ENCODE measurements at regions of chr15 and their contacts with region 1.

Region 1: GRCh38 chr15:88834211-88834812 is 31.1 kb downstream of the ACAN start:
- DNase-seq: peak; percentile 39
- H3K4me3 ChIP-seq: no peak overlapping the region
- H3K27ac ChIP-seq: no peak overlapping the region
- H3K4me1 ChIP-seq: no peaks in the 10 kb centered on the region
- H3K27me3 ChIP-seq: no peaks in the 10 kb centered on the region
- CTCF ChIP-seq: peak; percentile 79

Region 2: GRCh38 chr15:88476635-88477060 is 357.7 kb before region 1 on chr15:
- CTCF ChIA-PET with region 1: no interaction called
- POLR2A ChIA-PET with region 1: no interaction called
- intact Hi-C with region 1: loop called (anchors 1 kb)
- DNase-seq: peak; percentile 49
- H3K4me3 ChIP-seq: no peak overlapping the region
- H3K27ac ChIP-seq: no peak overlapping the region
- H3K4me1 ChIP-seq: no peaks in the 10 kb centered on the region
- H3K27me3 ChIP-seq: no peaks in the 10 kb centered on the region
- CTCF ChIP-seq: peak; percentile 60

Region 3: DNA sequence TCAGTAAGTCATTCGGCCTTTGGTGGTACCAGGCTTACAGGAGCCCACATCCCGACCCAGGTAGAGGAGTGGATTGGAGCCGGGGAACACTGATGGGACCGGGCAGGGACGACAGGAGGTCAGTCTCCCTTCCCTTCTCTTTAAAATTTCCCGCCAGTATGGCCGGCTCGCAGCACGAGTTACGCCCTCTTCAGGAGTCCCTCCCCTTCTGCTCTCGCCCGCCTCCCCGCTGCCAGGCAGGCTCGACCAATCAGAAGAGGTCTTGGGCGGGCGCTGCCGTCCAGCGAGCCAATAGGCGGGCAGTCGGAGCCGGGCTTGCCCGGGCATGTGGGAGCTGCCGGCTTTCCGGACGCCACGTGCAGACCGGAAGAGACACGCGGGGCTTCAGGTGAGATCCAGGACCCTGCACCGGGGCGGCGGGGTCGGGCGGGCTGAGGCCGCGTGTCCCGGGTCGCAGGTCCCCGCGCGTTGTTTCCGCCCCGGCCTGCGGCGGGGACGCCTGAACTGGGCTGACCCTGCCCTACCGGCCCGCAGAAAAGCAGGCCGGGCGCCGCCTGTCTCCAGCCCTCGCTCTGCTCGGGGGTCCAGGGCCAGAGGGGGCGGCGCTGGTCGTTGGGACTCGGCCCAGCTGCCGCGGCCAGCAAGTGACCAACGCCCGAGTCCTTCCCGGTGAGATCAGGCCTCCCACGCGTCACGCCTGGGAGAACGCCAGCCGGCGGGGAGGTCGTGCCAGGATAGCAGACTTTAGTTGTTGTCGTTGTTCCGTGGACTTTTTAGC is 213.1 kb before region 1 on chr15 and contains the start of gene AEN:
- CTCF ChIA-PET with region 1: interaction called, 3 read pairs
- POLR2A ChIA-PET with region 1: no interaction called
- intact Hi-C with region 1: loop called (anchors 5 kb)
- DNase-seq: peak; percentile 96
- H3K4me3 ChIP-seq: peak within 1 kb of the TSS; percentile 86
- H3K27ac ChIP-seq: peak within 1 kb of the TSS; percentile 96
- H3K4me1 ChIP-seq: peaks cover 16% of the 10 kb centered on the region
- H3K27me3 ChIP-seq: no peaks in the 10 kb centered on the region
- CTCF ChIP-seq: no peak
- total RNA-seq, gene AEN: 44.4 and 52.4 TPM in 2 replicates

Region 4: GRCh38 chr15:88657326-88658069 is 176.8 kb before region 1 on chr15:
- CTCF ChIA-PET with region 1: no interaction called
- POLR2A ChIA-PET with region 1: no interaction called
- intact Hi-C with region 1: loop called (anchors 10 kb)
- DNase-seq: peak; percentile 41
- H3K4me3 ChIP-seq: no peak overlapping the region
- H3K27ac ChIP-seq: no peak overlapping the region
- H3K4me1 ChIP-seq: no peaks in the 10 kb centered on the region
- H3K27me3 ChIP-seq: peaks cover 12% of the 10 kb centered on the region
- CTCF ChIP-seq: peak; percentile 56

Region 5: GRCh38 chr15:88878720-88879184 is 44.4 kb after region 1 on chr15:
- CTCF ChIA-PET with region 1: no interaction called
- POLR2A ChIA-PET with region 1: no interaction called
- intact Hi-C with region 1: no loop called
- DNase-seq: peak; percentile 61
- H3K4me3 ChIP-seq: no peak overlapping the region
- H3K27ac ChIP-seq: no peak overlapping the region
- H3K4me1 ChIP-seq: no peaks in the 10 kb centered on the region
- H3K27me3 ChIP-seq: peaks cover 11% of the 10 kb centered on the region
- CTCF ChIP-seq: peak; percentile 90

Region 6: DNA sequence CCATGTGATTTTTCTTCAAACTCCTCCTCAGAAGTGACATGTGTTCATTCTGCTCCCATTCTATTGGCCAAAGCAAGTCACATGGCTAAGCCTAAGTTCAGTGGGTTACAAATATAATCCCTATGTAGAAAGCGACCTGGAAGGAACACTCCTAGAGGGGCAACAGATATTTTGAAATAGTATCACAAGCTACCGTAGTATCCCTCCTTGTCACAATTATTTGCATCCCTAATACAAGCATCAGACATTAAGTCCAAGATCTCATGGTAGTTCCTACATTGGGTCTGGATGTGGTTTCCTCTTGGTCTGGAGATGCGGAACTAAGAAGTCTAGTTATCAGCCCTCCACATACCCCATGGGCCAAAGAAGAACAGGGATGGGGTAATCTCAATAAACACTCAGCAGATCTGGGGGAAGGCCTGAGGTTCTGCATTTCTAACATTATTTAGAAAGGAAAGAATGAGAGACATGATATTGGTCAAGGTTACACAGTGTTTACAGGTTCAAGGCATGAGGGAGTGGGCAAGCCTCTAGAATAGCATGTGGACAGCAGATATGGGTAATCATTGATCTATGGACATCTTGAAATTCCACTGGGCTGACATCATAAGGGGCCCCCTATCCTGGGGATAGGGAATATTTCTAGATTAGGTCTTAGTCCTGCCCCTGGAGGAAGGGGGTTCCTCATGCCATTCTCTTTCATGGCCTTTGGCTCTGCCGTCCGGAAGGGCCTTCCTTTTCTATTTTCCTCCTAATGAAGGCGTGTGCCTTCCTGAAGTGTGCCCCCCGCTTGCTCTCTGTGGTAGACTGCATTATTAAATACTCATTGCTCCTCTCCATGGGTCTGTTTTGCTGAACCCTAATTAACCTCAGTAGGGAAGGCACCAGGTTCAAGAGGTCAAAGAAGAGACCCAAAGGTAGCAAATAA is 236.1 kb after region 1 on chr15:
- CTCF ChIA-PET with region 1: no interaction called
- POLR2A ChIA-PET with region 1: no interaction called
- intact Hi-C with region 1: no loop called
- DNase-seq: no peak
- H3K4me3 ChIP-seq: no peak overlapping the region
- H3K27ac ChIP-seq: no peak overlapping the region
- H3K4me1 ChIP-seq: no peaks in the 10 kb centered on the region
- H3K27me3 ChIP-seq: no peaks in the 10 kb centered on the region
- CTCF ChIP-seq: no peak

Measured in A673 (cell line).